Activated B cell treated with CpG ODN at 0.5 μM for 24 hours (primary cell): ENCODE measurements at regions of chr14 and their contacts with region 1.

Region 1: GRCh38 chr14:94548999-94549985 is 11.9 kb upstream of the SERPINA4 start:
- DNase-seq: peak; percentile 31
- ATAC-seq: peak; percentile 31
- H3K4me3 Mint-ChIP-seq: no peak overlapping the region
- H3K27ac Mint-ChIP-seq: no peak overlapping the region
- H3K4me1 Mint-ChIP-seq: no peaks in the 10 kb centered on the region
- H3K27me3 Mint-ChIP-seq: peaks cover 10% of the 10 kb centered on the region
- CTCF ChIP-seq: no peak

Region 2: GRCh38 chr14:93870377-93870776 is 678.9 kb before region 1 on chr14:
- CTCF ChIA-PET with region 1: no interaction called
- POLR2A ChIA-PET with region 1: no interaction called
- intact Hi-C with region 1: no loop called
- DNase-seq: no peak
- ATAC-seq: no peak
- H3K4me3 Mint-ChIP-seq: no peak overlapping the region
- H3K27ac Mint-ChIP-seq: no peak overlapping the region
- H3K4me1 Mint-ChIP-seq: no peaks in the 10 kb centered on the region
- H3K27me3 Mint-ChIP-seq: peaks cover 21% of the 10 kb centered on the region
- CTCF ChIP-seq: no peak

Region 3: GRCh38 chr14:94423453-94424056 is 125.7 kb before region 1 on chr14:
- CTCF ChIA-PET with region 1: interaction called, 9 read pairs
- POLR2A ChIA-PET with region 1: no interaction called
- intact Hi-C with region 1: loop called (anchors 1 kb)
- DNase-seq: peak; percentile 21
- ATAC-seq: no peak
- H3K4me3 Mint-ChIP-seq: no peak overlapping the region
- H3K27ac Mint-ChIP-seq: no peak overlapping the region
- H3K4me1 Mint-ChIP-seq: no peaks in the 10 kb centered on the region
- H3K27me3 Mint-ChIP-seq: peaks cover 7% of the 10 kb centered on the region
- CTCF ChIP-seq: no peak

Region 4: GRCh38 chr14:94439453-94440057 is 109.7 kb before region 1 on chr14:
- CTCF ChIA-PET with region 1: interaction called, 21 read pairs
- POLR2A ChIA-PET with region 1: no interaction called
- intact Hi-C with region 1: loop called (anchors 1 kb)
- DNase-seq: no peak
- ATAC-seq: no peak
- H3K4me3 Mint-ChIP-seq: no peak overlapping the region
- H3K27ac Mint-ChIP-seq: no peak overlapping the region
- H3K4me1 Mint-ChIP-seq: no peaks in the 10 kb centered on the region
- H3K27me3 Mint-ChIP-seq: peaks cover 3% of the 10 kb centered on the region
- CTCF ChIP-seq: no peak

Region 5: GRCh38 chr14:94474581-94475031 is 74.7 kb before region 1 on chr14:
- CTCF ChIA-PET with region 1: no interaction called
- POLR2A ChIA-PET with region 1: no interaction called
- intact Hi-C with region 1: no loop called
- DNase-seq: no peak
- ATAC-seq: no peak
- H3K4me3 Mint-ChIP-seq: no peak overlapping the region
- H3K27ac Mint-ChIP-seq: no peak overlapping the region
- H3K4me1 Mint-ChIP-seq: peaks cover 22% of the 10 kb centered on the region
- H3K27me3 Mint-ChIP-seq: peaks cover 3% of the 10 kb centered on the region
- CTCF ChIP-seq: no peak